ENCODE measurements at regions of chr2 and their contacts with region 1.

Region 1: DNA sequence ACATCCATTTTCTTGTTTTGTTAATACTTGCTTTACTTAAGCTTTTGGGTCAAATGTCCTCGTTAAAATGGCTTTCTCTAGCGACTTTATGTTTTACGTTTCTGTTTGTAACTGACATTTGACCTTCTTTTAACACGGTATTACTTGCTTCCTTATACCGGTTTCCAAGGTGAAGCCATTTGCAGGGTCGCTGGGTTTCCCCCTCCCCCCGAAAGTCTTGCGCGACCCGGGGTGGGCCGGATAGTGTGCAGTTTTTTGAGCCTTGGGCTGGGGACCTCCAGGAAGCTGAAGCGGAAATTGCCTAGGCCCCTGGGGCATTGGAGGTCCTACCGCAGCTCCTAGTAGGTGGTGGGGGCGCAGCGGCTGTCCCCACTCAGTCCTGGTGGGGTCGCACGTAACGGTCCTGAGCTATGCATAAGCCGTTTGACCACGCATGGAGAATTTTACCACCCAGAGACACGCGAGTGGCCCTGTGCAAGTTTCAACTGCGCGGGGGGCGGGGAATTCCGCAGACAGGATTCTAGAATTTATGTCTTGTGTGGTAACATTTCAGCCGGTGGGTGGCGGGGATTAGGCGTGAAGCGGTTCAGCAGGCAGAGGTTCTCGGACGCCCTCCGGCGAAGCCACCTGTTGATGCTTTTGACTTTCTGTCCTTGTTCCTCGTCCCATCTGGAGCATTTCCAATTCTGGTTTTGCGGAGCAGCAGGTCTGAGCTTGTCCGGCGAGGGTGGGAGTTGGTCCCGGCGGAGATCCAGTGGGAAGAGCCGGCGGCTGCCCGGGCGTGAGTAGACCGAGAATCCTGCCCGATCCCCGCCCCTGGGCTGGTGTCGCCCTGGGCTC is 2.4 kb downstream of the CFLAR start:
- DNase-seq: peak; percentile 90
- H3K4me3 Mint-ChIP-seq: peak overlapping the region; percentile 96
- H3K27ac Mint-ChIP-seq: peak overlapping the region; percentile 98
- H3K4me1 Mint-ChIP-seq: peaks cover 50% of the 10 kb centered on the region
- H3K27me3 Mint-ChIP-seq: no peaks in the 10 kb centered on the region

Region 2: GRCh38 chr2:201071479-201072200 is 46.7 kb before region 1 on chr2 and contains the starts of genes HYCC2 and NDUFB3:
- CTCF ChIA-PET with region 1: interaction called, 47 read pairs
- POLR2A ChIA-PET with region 1: interaction called, 105 read pairs
- DNase-seq: peak; percentile 95
- H3K4me3 Mint-ChIP-seq: peak within 1 kb of the TSS; percentile 96
- H3K27ac Mint-ChIP-seq: peak within 1 kb of the TSS; percentile 88
- H3K4me1 Mint-ChIP-seq: peaks cover 57% of the 10 kb centered on the region
- H3K27me3 Mint-ChIP-seq: no peaks in the 10 kb centered on the region
- total RNA-seq, gene HYCC2: 27.9 to 31.9 TPM
- total RNA-seq, gene NDUFB3: 133 to 135 TPM

Region 3: GRCh38 chr2:201130524-201131186 is 12.3 kb after region 1 on chr2:
- CTCF ChIA-PET with region 1: interaction called, 75 read pairs
- POLR2A ChIA-PET with region 1: no interaction called
- DNase-seq: peak; percentile 50
- H3K4me3 Mint-ChIP-seq: peak overlapping the region; percentile 83
- H3K27ac Mint-ChIP-seq: peak overlapping the region; percentile 90
- H3K4me1 Mint-ChIP-seq: peaks cover 79% of the 10 kb centered on the region
- H3K27me3 Mint-ChIP-seq: no peaks in the 10 kb centered on the region

Region 4: DNA sequence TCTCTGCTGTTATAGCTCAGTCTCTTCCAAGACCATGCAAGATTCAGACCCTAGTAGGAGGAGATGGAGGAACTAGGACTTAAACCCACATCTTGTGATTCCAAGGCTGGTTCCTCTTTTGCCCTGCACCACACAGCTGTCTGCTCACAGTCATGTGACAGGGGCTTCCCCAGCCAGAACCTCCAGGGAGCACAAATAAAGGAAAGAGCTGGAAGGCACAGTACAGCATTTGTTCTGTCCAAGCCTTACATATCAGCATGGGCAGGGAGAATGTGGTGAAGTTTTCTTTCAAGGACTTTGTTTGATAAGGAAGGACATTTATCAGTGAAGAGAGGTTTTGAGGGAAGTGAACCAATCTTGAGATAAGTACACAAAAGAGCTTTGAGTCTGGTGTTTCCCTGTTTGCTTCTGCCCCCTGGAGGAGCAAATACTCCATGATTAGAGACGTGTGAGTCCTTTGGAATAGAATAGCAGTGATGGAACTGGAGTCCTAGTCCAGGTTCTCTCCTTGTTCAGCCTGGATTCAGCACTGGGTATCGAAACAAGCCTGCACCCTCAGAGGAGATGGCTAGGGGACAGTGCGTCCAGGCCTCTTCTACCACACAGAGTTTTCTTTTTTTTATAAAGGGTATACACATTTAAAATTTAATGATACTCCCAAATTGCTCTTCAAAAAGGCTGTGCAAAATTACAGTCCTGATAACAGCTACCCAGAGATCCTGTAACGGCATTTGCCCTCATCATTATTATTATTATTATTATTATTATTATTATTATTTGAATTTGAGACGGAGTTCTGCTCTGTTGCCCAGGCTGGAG is 40.0 kb after region 1 on chr2:
- CTCF ChIA-PET with region 1: interaction called, 47 read pairs
- POLR2A ChIA-PET with region 1: interaction called, 36 read pairs
- DNase-seq: peak; percentile 63
- H3K4me3 Mint-ChIP-seq: no peak overlapping the region
- H3K27ac Mint-ChIP-seq: peak overlapping the region; percentile 50
- H3K4me1 Mint-ChIP-seq: peaks cover 15% of the 10 kb centered on the region
- H3K27me3 Mint-ChIP-seq: no peaks in the 10 kb centered on the region

Region 5: DNA sequence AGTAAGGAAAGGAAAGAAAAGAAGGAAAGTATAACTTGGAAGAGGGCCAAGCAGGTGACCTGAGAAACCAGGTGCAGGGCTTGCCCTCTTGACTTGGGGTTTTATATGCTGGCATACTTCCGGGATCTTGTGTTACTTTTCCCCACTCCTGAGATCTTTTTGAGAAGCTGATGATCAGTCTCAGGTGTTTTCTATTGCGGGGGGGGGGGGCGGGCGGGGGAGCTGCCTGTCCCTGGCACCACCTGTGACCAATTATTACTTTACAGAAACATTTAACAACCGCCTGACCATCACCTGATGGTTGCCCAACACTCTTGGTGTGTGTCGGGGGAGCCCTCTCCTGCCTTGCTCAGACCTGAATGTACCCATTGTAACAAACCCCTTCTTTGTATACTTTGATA is 57.7 kb after region 1 on chr2:
- CTCF ChIA-PET with region 1: interaction called, 8 read pairs
- POLR2A ChIA-PET with region 1: interaction called, 31 read pairs
- DNase-seq: no peak
- H3K4me3 Mint-ChIP-seq: no peak overlapping the region
- H3K27ac Mint-ChIP-seq: no peak overlapping the region
- H3K4me1 Mint-ChIP-seq: peaks cover 25% of the 10 kb centered on the region
- H3K27me3 Mint-ChIP-seq: peaks cover 3% of the 10 kb centered on the region

Region 6: DNA sequence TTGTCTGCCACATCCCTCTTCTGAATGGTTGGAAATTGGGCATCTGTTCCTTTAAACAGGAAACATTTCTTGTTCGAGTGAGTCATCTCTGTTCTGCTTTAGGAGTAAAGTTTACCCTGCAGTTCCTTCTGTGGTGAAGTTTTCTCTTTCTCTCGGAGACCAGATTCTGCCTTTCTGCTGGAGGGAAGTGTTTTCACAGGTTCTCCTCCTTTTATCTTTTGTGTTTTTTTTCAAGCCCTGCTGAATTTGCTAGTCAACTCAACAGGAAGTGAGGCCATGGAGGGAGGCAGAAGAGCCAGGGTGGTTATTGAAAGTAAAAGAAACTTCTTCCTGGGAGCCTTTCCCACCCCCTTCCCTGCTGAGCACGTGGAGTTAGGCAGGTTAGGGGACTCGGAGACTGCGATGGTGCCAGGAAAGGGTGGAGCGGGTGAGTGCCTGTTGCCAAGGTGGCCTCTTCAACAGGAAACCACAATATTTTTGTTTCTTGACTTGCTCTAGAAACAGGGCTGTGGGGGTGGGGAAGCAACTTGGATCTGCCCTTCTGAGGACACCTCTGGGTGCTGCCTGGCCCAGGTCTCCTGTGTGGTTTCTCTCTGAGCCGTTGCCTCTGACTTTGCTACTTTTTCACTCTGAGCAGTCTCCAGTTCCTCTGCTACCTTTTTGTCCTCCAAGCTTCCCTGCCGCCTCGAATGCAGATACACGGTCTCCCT is 139.8 kb after region 1 on chr2:
- CTCF ChIA-PET with region 1: interaction called, 3 read pairs
- POLR2A ChIA-PET with region 1: interaction called, 57 read pairs
- DNase-seq: peak; percentile 96
- H3K4me3 Mint-ChIP-seq: peak overlapping the region; percentile 81
- H3K27ac Mint-ChIP-seq: peak overlapping the region; percentile 98
- H3K4me1 Mint-ChIP-seq: peaks cover 68% of the 10 kb centered on the region
- H3K27me3 Mint-ChIP-seq: no peaks in the 10 kb centered on the region